A673 (cell line): ENCODE measurements at regions of chr14 and their contacts with region 1.

Region 1: GRCh38 chr14:73472185-73473114 is 14.1 kb upstream of the NUMB start:
- DNase-seq: peak; percentile 76
- H3K4me3 ChIP-seq: no peak overlapping the region
- H3K27ac ChIP-seq: no peak overlapping the region
- H3K4me1 ChIP-seq: no peaks in the 10 kb centered on the region
- H3K27me3 ChIP-seq: no peaks in the 10 kb centered on the region
- CTCF ChIP-seq: peak; percentile 74

Region 2: DNA sequence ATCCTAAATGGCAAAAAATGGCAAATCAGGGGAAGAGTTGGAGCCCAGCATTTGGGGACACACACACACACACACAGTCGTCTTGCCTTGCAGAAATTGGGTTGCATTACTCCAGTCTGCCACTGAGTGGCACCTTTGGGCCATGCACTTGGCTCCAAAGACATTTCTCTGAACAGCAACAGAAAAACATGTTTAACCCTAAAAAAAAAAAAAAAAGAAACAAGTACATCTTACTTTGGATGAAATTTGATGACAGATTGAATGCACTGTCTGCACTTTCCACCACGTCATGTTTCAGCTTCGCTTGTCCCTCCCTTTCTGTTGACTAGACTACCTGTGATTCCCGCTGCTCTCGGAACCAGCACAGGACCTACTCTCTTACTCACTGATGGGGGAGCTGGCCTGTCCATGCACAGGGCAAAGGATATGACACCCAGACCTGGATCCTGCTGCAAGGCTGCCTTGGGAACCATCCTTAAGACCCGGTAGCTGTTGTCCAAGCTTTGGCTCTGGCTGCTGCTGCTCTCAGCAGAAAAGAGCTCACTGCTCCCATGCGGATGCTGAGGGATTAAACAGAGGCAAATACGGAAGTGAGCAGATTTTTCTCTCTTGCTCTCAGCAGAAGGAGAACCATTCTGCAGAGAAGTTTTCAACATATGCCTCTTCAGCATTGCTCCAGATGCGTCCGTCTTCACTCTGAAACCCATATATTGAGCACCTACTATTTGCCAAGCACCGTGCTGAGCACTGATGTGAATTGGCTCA is 955.3 kb before region 1 on chr14:
- CTCF ChIA-PET with region 1: no interaction called
- POLR2A ChIA-PET with region 1: no interaction called
- intact Hi-C with region 1: loop called (anchors 5 kb)
- DNase-seq: peak; percentile 85
- H3K4me3 ChIP-seq: no peak overlapping the region
- H3K27ac ChIP-seq: no peak overlapping the region
- H3K4me1 ChIP-seq: no peaks in the 10 kb centered on the region
- H3K27me3 ChIP-seq: no peaks in the 10 kb centered on the region
- CTCF ChIP-seq: peak; percentile 89

Region 3: DNA sequence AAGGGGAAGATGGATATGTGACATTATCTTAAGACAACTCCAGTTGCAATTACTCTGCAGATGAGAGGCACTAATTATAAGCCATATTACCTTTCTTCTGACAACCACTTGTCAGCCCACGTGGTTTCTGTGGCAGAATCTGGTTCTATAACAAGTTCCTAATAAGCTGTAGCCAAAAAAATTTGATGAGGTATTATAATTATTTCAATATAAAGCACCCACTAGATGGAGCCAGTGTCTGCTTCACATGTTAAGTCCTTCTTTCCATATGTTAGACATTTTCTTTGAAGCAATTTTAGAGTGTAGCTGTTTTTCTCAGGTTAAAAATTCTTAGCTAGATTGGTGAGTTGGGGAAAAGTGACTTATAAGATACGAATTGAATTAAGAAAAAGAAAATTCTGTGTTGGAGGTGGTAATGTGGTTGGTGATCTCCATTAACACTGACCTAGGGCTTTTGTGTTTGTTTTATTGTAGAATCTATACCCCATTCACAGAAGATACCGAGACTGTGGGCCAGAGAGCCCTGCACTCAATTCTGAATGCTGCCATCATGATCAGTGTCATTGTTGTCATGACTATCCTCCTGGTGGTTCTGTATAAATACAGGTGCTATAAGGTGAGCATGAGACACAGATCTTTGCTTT is 299.2 kb before region 1 on chr14:
- CTCF ChIA-PET with region 1: interaction called, 10 read pairs
- POLR2A ChIA-PET with region 1: no interaction called
- intact Hi-C with region 1: loop called (anchors 2 kb)
- DNase-seq: peak; percentile 63
- H3K4me3 ChIP-seq: no peak overlapping the region
- H3K27ac ChIP-seq: no peak overlapping the region
- H3K4me1 ChIP-seq: no peaks in the 10 kb centered on the region
- H3K27me3 ChIP-seq: no peaks in the 10 kb centered on the region
- CTCF ChIP-seq: peak; percentile 65

Region 4: DNA sequence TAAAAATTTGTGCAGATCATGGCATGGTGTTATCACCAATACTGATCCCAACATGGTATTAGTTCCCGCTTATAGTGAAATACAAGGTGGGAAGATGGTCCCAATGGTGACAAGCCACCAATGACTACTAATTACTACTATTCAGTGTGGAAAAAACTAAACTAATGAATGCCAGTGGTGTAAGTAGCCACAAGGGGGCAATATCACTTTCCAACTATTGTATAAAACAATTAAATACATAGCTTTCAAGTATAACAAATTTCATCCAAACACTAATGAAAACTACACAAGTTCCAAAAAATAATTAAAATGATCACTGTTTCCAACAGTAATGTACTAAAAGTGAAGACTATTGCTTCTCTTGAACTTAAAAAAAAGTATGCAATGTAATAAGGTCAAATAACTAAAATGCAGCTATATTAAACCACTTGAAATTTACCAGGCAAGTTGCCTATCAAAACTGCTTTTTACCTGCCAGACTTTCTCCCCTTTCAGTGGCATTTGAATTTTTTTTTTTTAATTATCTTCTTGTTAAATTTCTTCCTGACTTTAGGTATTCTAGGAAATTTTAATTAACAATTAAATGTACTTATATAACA is 177.2 kb before region 1 on chr14:
- CTCF ChIA-PET with region 1: interaction called, 46 read pairs
- POLR2A ChIA-PET with region 1: no interaction called
- intact Hi-C with region 1: loop called (anchors 1 kb)
- DNase-seq: peak; percentile 73
- H3K4me3 ChIP-seq: no peak overlapping the region
- H3K27ac ChIP-seq: no peak overlapping the region
- H3K4me1 ChIP-seq: no peaks in the 10 kb centered on the region
- H3K27me3 ChIP-seq: no peaks in the 10 kb centered on the region
- CTCF ChIP-seq: peak; percentile 88

Region 5: DNA sequence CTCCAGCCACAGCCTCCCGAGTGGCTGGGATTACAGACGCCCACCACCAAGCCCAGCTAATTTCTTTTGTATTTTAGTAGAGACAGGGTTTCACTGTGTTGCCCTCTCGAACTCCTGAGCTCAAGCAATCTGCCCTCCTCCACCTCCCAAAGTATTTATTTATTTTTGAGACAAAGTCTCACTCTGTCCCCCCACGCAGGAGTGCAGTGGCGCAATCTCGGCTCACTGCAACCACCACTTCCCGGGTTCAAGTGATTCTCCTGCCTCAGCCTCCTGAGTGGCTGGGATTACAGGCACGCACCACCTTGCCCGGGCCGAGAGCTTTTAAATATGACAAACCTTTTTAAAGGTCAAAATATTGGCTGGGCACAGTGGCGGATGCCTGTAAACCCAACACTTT is 28.7 kb before region 1 on chr14:
- CTCF ChIA-PET with region 1: no interaction called
- POLR2A ChIA-PET with region 1: interaction called, 13 read pairs
- intact Hi-C with region 1: no loop called
- DNase-seq: no peak
- H3K4me3 ChIP-seq: no peak overlapping the region
- H3K27ac ChIP-seq: no peak overlapping the region
- H3K4me1 ChIP-seq: peaks cover 12% of the 10 kb centered on the region
- H3K27me3 ChIP-seq: no peaks in the 10 kb centered on the region
- CTCF ChIP-seq: no peak

Region 6: GRCh38 chr14:73862480-73862879 is 390.0 kb after region 1 on chr14:
- CTCF ChIA-PET with region 1: no interaction called
- POLR2A ChIA-PET with region 1: no interaction called
- intact Hi-C with region 1: no loop called
- DNase-seq: no peak
- H3K4me3 ChIP-seq: no peak overlapping the region
- H3K27ac ChIP-seq: no peak overlapping the region
- H3K4me1 ChIP-seq: no peaks in the 10 kb centered on the region
- H3K27me3 ChIP-seq: no peaks in the 10 kb centered on the region
- CTCF ChIP-seq: no peak